ENCODE measurements at regions of chr2 and their contacts with region 1.

Region 1: GRCh38 chr2:219057709-219058540 is 2.8 kb downstream of the IHH start:
- DNase-seq: peak; percentile 90
- CTCF ChIP-seq: peak; percentile 99

Region 2: DNA sequence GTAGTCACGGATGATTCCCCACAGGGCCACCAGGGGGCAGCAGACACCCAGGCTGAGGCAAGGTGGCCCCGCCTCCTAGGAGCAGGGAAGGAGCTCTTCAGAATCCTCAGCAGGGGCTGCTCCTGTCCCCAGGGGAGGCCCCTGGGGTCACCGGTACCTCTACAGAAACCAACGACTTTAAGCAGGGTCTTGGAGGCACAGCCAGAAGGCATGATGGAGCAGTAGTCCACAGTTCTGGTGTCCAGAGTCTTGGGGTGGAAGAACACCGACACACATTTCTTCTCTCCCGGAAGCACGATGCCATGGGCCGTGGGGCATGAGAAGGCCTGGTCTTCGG is 28.1 kb before region 1 on chr2:
- CTCF ChIA-PET with region 1: interaction called, 27 read pairs
- POLR2A ChIA-PET with region 1: no interaction called
- DNase-seq: peak; percentile 90
- CTCF ChIP-seq: peak; percentile 95

Region 3: DNA sequence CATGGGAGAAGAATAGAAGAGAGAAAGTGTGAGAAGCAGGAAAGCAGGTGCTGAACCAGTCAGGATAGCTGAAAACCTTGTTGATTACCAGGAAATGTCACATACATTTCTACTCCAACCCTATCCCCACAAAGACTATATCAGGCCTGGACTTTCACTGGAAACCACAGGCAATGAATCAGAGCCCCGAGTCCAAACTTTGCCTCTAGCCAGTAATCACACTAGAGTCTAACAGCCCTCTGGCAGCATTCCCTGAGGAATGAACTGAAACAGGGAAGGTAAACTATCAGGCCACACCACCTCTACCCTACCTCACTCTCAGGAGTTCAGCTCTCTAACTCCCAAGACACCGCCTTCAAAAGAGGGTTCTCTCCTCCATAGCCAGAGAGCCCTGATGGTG is 21.5 kb after region 1 on chr2:
- CTCF ChIA-PET with region 1: interaction called, 48 read pairs
- POLR2A ChIA-PET with region 1: no interaction called
- DNase-seq: no peak
- CTCF ChIP-seq: no peak

Region 4: GRCh38 chr2:219109471-219109870 is 51.5 kb after region 1 on chr2:
- CTCF ChIA-PET with region 1: interaction called, 17 read pairs
- POLR2A ChIA-PET with region 1: no interaction called
- DNase-seq: no peak
- CTCF ChIP-seq: no peak

Region 5: GRCh38 chr2:219133976-219134375 is 76.1 kb after region 1 on chr2:
- CTCF ChIA-PET with region 1: interaction called, 17 read pairs
- POLR2A ChIA-PET with region 1: no interaction called
- DNase-seq: no peak
- CTCF ChIP-seq: no peak

Region 6: DNA sequence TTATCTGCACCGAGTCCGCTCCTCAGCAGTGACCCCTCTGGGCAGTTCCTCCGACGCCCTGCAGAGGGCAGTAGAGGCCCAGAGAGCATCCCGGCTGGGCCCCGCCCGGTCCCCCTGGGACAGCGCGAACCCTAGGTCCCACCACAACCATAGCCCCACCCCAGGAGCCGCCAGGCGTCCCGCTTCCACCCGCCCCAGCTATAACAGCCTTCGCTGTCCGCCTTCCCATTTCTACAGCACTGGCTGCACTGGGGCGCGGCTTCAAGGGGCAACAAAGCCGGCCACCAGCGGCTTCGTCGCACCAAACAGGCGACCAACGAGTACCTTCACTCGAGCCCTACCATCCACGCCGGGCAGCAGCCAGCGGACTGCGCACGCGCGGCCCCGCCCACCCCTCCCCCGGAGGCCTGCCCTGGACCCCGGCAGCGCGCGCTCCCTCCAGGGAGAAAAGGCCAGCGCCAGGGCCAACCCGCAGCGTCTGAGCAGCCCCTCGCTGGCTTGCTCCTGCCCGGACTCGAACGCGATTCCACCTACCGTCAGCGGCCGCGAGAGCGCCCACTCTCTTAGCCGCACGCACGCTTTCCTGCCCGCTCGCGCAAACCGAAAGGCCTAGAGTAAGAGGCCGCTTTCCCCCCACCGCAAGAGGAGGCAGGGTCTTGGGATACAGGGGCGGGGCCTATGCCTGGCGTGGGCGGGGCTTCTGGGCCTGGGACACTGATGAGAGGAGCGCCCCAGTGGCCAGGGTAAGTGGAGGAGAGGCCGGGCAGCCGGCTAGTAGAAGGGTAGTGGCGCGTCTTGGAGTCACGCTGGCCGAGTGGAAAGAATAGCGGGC is 102.5 kb after region 1 on chr2 and contains the start of gene NHEJ1:
- CTCF ChIA-PET with region 1: interaction called, 138 read pairs
- POLR2A ChIA-PET with region 1: no interaction called
- DNase-seq: peak; percentile 97
- CTCF ChIP-seq: peak; percentile 94